ENCODE measurements at regions of chr15 and their contacts with region 1.

Region 1: DNA sequence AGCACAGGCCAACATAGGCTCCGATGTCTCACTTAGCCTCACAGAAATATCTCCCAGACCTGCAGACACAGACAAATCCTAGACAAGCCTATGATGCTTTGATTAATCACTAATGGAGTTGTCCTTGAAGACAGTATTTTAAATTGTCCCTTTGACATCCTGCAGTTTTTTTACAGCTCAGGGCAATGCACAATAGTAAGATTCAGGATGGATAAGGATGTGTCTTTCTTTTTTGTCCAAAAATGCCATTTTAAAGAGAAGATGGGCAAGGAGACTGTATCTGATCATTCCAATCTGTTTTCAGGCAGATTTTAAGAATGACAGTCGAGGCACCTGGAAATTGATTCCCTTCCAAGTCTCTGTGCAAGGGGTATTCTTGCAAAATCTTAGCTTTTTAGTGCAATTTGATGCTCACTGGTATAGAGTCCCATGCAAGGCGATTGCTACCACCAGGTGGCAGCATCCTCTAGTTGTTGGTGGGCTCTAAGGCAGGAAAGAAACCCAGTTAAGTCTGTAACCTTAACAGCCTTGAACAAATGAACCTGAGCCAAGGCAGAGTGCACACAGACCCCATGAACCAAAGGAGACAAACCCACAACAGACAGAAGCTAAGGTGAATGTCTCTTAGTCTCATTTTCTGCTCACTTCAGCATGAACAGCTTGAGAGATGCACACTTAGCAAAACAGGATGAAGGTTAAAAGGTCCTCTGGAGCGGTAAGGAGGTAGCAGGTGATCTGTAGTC is 51.2 kb upstream of the MINAR1 start:
- DNase-seq: peak; percentile 89
- ATAC-seq: peak; percentile 95
- H3K4me3 Mint-ChIP-seq: no peak overlapping the region
- H3K27ac Mint-ChIP-seq: no peak overlapping the region
- H3K4me1 Mint-ChIP-seq: peaks cover 3% of the 10 kb centered on the region
- H3K27me3 Mint-ChIP-seq: no peaks in the 10 kb centered on the region

Region 2: DNA sequence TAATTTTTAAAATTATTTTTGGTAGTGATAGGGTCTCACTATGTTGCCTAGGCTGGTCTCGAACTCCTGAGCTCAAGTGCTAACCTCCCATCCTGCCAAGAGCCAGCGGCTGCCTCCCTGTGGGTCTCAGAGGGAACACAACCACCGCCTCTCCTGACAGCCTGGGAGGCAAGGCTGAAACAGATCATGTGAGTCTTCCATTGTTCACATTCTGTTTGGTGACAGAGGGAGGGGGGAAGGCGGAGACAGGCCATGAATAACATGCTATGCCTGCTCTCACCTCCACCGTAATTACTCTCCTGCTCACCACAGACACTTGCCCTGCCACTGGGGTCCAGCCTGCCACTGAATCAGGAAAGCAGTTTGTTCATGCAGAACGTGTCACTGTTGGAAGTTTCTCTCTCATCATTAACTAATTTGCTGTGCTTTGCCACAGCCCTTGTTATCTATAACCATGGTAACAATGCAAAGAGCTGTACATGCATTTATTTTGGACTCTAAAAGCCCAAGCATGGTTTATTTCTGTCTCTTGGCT is 211.9 kb before region 1 on chr15:
- CTCF ChIA-PET with region 1: no interaction called
- POLR2A ChIA-PET with region 1: no interaction called
- intact Hi-C with region 1: no loop called
- DNase-seq: no peak
- ATAC-seq: no peak
- H3K4me3 Mint-ChIP-seq: no peak overlapping the region
- H3K27ac Mint-ChIP-seq: no peak overlapping the region
- H3K4me1 Mint-ChIP-seq: no peaks in the 10 kb centered on the region
- H3K27me3 Mint-ChIP-seq: peaks cover 17% of the 10 kb centered on the region

Region 3: GRCh38 chr15:79349525-79349924 is 31.4 kb before region 1 on chr15:
- CTCF ChIA-PET with region 1: interaction called, 5 read pairs
- POLR2A ChIA-PET with region 1: no interaction called
- intact Hi-C with region 1: loop called in 1 of 2 experiments (anchors 1 kb)
- DNase-seq: no peak
- ATAC-seq: no peak
- H3K4me3 Mint-ChIP-seq: no peak overlapping the region
- H3K27ac Mint-ChIP-seq: no peak overlapping the region
- H3K4me1 Mint-ChIP-seq: no peaks in the 10 kb centered on the region
- H3K27me3 Mint-ChIP-seq: no peaks in the 10 kb centered on the region

Region 4: DNA sequence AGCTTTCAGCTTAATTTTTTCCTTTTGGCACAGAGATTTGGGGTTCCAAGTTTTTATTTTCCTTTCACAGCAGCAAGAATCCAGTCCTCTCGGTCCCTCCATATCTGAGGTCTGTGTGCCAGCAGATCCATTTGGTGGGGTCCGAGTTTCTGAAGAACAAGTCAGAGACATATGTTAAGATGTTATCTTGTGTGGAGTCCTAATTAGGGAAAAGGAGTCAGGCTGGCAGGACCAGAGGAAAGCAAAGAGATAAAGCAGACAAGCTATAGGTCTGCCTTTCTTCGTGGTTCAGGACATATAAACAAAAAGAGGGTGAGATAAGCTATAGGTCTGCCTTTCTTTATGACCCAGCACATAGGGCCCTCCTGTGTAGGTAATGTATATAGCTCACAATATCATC is 15.2 kb before region 1 on chr15:
- CTCF ChIA-PET with region 1: interaction called, 19 read pairs
- POLR2A ChIA-PET with region 1: no interaction called
- intact Hi-C with region 1: no loop called
- DNase-seq: no peak
- ATAC-seq: no peak
- H3K4me3 Mint-ChIP-seq: no peak overlapping the region
- H3K27ac Mint-ChIP-seq: no peak overlapping the region
- H3K4me1 Mint-ChIP-seq: no peaks in the 10 kb centered on the region
- H3K27me3 Mint-ChIP-seq: no peaks in the 10 kb centered on the region

Region 5: DNA sequence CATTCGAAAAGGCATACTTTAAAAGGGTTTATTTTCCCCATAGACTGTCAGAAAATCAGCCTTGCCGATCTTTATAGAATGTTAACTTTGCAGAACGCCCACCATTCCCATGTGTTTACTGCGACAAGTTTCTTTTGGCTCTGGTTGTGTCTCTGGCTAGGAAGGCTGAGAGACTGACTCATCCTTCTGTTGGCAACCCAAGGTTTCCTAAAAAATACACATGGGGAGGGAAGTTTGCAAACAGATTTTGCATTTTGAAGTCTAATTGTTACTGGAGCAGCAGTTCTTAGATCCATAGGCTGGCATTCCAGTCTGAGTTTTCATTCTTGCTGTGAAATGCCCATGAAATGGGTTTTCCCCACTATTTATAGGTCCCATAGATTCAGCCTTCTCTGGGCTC is 13.3 kb after region 1 on chr15:
- CTCF ChIA-PET with region 1: interaction called, 22 read pairs
- POLR2A ChIA-PET with region 1: no interaction called
- intact Hi-C with region 1: no loop called
- DNase-seq: no peak
- ATAC-seq: no peak
- H3K4me3 Mint-ChIP-seq: no peak overlapping the region
- H3K27ac Mint-ChIP-seq: no peak overlapping the region
- H3K4me1 Mint-ChIP-seq: no peaks in the 10 kb centered on the region
- H3K27me3 Mint-ChIP-seq: no peaks in the 10 kb centered on the region

Region 6: GRCh38 chr15:79596051-79596507 is 215.2 kb after region 1 on chr15:
- CTCF ChIA-PET with region 1: interaction called, 144 read pairs
- POLR2A ChIA-PET with region 1: no interaction called
- intact Hi-C with region 1: loop called (anchors 1 kb)
- DNase-seq: peak; percentile 80
- ATAC-seq: peak; percentile 100
- H3K4me3 Mint-ChIP-seq: no peak overlapping the region
- H3K27ac Mint-ChIP-seq: no peak overlapping the region
- H3K4me1 Mint-ChIP-seq: no peaks in the 10 kb centered on the region
- H3K27me3 Mint-ChIP-seq: peaks cover 25% of the 10 kb centered on the region

Region 7: GRCh38 chr15:80173022-80173759 is 792.3 kb after region 1 on chr15:
- CTCF ChIA-PET with region 1: interaction called, 3 read pairs
- POLR2A ChIA-PET with region 1: no interaction called
- intact Hi-C with region 1: loop called (anchors 1 to 2 kb)
- DNase-seq: peak; percentile 85
- ATAC-seq: peak; percentile 88
- H3K4me3 Mint-ChIP-seq: no peak overlapping the region
- H3K27ac Mint-ChIP-seq: no peak overlapping the region
- H3K4me1 Mint-ChIP-seq: no peaks in the 10 kb centered on the region
- H3K27me3 Mint-ChIP-seq: no peaks in the 10 kb centered on the region

Measured in activated CD4-positive, alpha-beta T cell treated with anti-CD3 and anti-CD28 coated beads for 36 hours (primary cell).